ENCODE measurements at regions of chr1 and their contacts with region 1.

Region 1: DNA sequence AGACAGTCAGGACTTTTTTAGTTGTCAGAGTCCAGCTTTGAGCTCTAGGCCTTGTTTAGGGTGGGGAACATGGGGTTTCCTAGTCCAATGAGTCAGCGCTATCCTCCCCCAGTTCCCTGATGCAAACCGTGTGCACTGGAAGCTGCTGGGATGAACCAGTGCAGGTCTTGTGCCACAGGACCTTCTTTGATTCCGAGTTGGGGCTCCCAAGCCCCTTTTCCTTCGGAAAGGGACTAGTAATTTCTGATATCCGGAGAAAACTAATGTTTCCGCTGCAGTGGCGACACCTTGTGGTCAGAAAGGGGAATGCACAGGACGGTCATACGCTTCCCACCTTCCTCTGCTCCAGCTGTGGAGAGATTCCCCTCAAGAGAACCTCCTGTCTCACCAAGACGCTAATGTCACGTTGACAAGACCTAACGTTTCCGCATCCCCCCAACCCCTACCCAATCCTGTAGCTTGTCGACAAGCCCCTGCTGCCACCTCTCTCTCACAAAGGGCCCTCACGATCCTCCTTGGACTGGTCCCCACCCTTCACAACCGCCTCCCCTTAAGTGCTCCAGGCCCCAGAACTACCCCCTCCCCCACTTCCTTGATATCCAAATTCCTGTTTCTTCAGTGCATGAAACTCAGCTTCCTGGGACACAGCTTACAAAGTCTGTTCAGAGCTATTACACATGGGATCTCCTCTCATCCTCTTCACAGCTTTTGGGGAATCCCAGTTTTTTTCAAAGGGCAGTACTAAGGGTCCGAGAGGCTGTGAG is 30.9 kb downstream of the GPA33 start:
- DNase-seq: no peak
- ATAC-seq: peak; percentile 64
- H3K4me3 ChIP-seq: 0 out of 4 replicates have a peak overlapping the region, but pooled peaks of 1 of the 2 experiments have one; percentile 16
- H3K27ac ChIP-seq: peak overlapping the region; percentile 40; the same call in 1 of the 2 replicates
- H3K4me1 ChIP-seq: no peaks in the 10 kb centered on the region
- H3K27me3 ChIP-seq: no peaks in the 10 kb centered on the region
- CTCF ChIP-seq: peak; percentile 95

Region 2: GRCh38 chr1:166910396-166910994 is 148.7 kb before region 1 on chr1:
- CTCF ChIA-PET with region 1: interaction called, 61 read pairs
- POLR2A ChIA-PET with region 1: no interaction called
- in situ Hi-C with region 1: no loop called
- intact Hi-C with region 1: loop called (anchors 1 kb)
- DNase-seq: peak; percentile 67
- ATAC-seq: peak; percentile 99
- H3K4me3 ChIP-seq: no peak overlapping the region
- H3K27ac ChIP-seq: no peak overlapping the region
- H3K4me1 ChIP-seq: no peaks in the 10 kb centered on the region
- H3K27me3 ChIP-seq: peaks cover 12% of the 10 kb centered on the region
- CTCF ChIP-seq: peak; percentile 80